Heart right ventricle (tissue), 16 donors: ENCODE measurements at regions of chr14 and their contacts with region 1.

Region 1: DNA sequence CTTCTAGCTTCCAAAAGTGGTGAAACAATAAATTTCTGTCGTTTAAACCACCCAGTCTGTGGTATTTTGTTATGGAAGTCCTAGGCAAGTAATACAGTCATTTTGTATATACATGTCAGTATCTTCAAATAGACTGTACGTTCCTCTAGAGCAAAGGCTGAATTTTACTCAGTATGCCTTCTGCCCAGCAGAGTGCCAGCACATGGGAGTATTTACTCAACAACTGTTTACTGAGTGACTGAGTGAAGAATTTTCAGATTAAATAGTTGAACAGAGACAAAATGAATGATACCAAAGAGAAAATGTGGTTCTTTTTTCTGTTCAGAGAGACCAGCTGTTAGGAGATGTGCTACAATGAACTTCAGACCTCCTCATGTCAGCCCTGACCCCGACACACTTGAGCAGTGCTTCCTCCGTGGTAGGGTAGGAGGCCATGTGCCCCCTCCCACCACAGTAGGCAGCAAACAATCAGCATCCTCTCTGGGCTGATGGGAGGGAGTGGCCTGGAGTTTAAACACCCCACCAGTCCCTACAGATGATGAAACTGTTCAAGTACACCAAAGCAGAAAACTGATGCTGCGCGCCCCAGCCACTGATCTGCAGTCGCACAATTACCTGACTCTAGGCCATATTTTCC is 21.7 kb downstream of the BMP4 start:
- DNase-seq: no peak
- ATAC-seq: no peak
- H3K4me3 ChIP-seq: no peak overlapping the region
- H3K27ac ChIP-seq: no peak overlapping the region
- H3K4me1 ChIP-seq: no peaks in the 10 kb centered on the region
- H3K27me3 ChIP-seq: no peaks in the 10 kb centered on the region
- CTCF ChIP-seq: no peak

Region 2: GRCh38 chr14:53786045-53786444 is 148.9 kb before region 1 on chr14:
- intact Hi-C with region 1: no loop called
- DNase-seq: no peak
- ATAC-seq: no peak
- H3K4me3 ChIP-seq: no peak overlapping the region
- H3K27ac ChIP-seq: no peak overlapping the region
- H3K4me1 ChIP-seq: no peaks in the 10 kb centered on the region
- H3K27me3 ChIP-seq: no peaks in the 10 kb centered on the region
- CTCF ChIP-seq: no peak

Region 3: GRCh38 chr14:53996041-53996440 is 61.1 kb after region 1 on chr14:
- intact Hi-C with region 1: loop called in 1 of 10 experiments (anchors 2 kb)
- DNase-seq: no peak
- ATAC-seq: no peak
- H3K4me3 ChIP-seq: no peak overlapping the region
- H3K27ac ChIP-seq: no peak overlapping the region
- H3K4me1 ChIP-seq: no peaks in the 10 kb centered on the region
- H3K27me3 ChIP-seq: no peaks in the 10 kb centered on the region
- CTCF ChIP-seq: no peak